IMR-90 (cell line): ENCODE measurements at regions of chr18 and their contacts with region 1.

Region 1: GRCh38 chr18:22563098-22563707 is 145.5 kb upstream of the CTAGE1 start:
- DNase-seq: peak; percentile 95
- ATAC-seq: peak; percentile 71
- H3K4me3 ChIP-seq: peak overlapping the region; percentile 5; the same call in 1 of the 2 replicates
- H3K27ac ChIP-seq: no peak overlapping the region
- H3K4me1 ChIP-seq: peaks cover 6% of the 10 kb centered on the region
- H3K27me3 ChIP-seq: no peaks in the 10 kb centered on the region; the same call in 1 of the 2 replicates
- CTCF ChIP-seq: peak; percentile 91
- POLR2A ChIP-seq: 0 out of 2 replicates have a peak, but pooled peaks have one; percentile 45
- RAD21 ChIP-seq: peak; percentile 100

Region 2: GRCh38 chr18:21904856-21905255 is 658.3 kb before region 1 on chr18:
- CTCF ChIA-PET with region 1: no interaction called
- POLR2A ChIA-PET with region 1: interaction called, 3 read pairs
- dilution Hi-C with region 1: no loop called
- in situ Hi-C with region 1: loop called (anchors 10 kb)
- intact Hi-C with region 1: no loop called
- DNase-seq: no peak
- ATAC-seq: no peak
- H3K4me3 ChIP-seq: no peak overlapping the region
- H3K27ac ChIP-seq: no peak overlapping the region
- H3K4me1 ChIP-seq: no peaks in the 10 kb centered on the region; the same call in 1 of the 2 replicates
- H3K27me3 ChIP-seq: peaks cover 18% of the 10 kb centered on the region
- CTCF ChIP-seq: no peak
- POLR2A ChIP-seq: no peak
- RAD21 ChIP-seq: no peak

Region 3: GRCh38 chr18:21997207-21998143 is 565.7 kb before region 1 on chr18:
- CTCF ChIA-PET with region 1: no interaction called
- POLR2A ChIA-PET with region 1: no interaction called
- dilution Hi-C with region 1: no loop called
- in situ Hi-C with region 1: no loop called
- intact Hi-C with region 1: loop called (anchors 5 kb)
- DNase-seq: peak; percentile 42
- ATAC-seq: peak; percentile 84
- H3K4me3 ChIP-seq: no peak overlapping the region
- H3K27ac ChIP-seq: no peak overlapping the region
- H3K4me1 ChIP-seq: no peaks in the 10 kb centered on the region
- H3K27me3 ChIP-seq: peaks cover 8% of the 10 kb centered on the region
- CTCF ChIP-seq: peak; percentile 68
- POLR2A ChIP-seq: no peak
- RAD21 ChIP-seq: peak; percentile 49

Region 4: GRCh38 chr18:22194151-22194598 is 369.0 kb before region 1 on chr18:
- CTCF ChIA-PET with region 1: no interaction called
- POLR2A ChIA-PET with region 1: interaction called, 18 read pairs
- dilution Hi-C with region 1: no loop called
- in situ Hi-C with region 1: no loop called
- intact Hi-C with region 1: no loop called
- DNase-seq: no peak
- ATAC-seq: no peak
- H3K4me3 ChIP-seq: no peak overlapping the region
- H3K27ac ChIP-seq: no peak overlapping the region
- H3K4me1 ChIP-seq: peaks cover 6% of the 10 kb centered on the region
- H3K27me3 ChIP-seq: no peaks in the 10 kb centered on the region
- CTCF ChIP-seq: no peak
- POLR2A ChIP-seq: no peak
- RAD21 ChIP-seq: no peak

Region 5: DNA sequence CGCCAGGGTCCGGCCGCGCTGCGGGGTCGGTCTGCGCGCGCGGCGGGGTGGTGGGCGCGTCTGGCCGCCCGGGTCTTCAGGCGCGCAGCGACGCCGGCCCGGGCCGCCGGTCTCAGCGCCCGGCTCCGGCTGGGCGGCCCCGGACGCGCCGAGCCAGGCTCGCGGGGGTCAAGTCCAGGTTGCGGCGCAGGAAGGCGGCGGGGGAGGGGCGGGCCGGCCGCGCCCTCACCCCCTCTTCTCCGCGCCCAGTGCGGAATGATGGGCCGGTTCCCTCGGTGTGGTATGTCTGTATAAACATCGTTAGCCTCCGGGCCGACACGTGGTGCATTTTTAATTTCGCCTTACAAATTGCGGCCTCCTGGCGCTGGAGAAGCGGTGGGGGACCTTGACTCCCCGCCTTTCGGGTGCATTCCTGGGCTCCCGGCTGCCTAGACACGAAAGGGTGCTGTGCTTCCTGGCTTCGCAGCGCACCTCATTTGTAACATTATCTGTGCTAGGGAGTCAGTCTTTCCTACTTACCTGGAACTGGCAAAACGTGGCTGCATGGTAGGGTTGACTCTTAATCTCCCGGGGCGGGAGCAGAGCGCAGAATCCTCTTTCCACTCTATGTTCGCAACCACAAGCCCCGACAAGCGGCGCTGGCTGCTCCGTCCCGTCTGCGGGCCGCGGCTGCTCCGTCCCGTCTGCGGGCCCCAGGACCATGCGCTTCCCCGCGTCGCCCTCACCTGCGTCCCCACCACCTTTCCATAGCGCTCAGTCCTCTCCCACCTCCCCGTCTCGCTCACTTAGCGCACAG is 214.5 kb before region 1 on chr18:
- CTCF ChIA-PET with region 1: no interaction called
- POLR2A ChIA-PET with region 1: no interaction called
- dilution Hi-C with region 1: no loop called
- in situ Hi-C with region 1: no loop called
- intact Hi-C with region 1: loop called (anchors 1 kb)
- DNase-seq: peak; percentile 42
- ATAC-seq: peak; percentile 77
- H3K4me3 ChIP-seq: peak overlapping the region; percentile 25
- H3K27ac ChIP-seq: peak overlapping the region; percentile 74
- H3K4me1 ChIP-seq: peaks cover 22% of the 10 kb centered on the region
- H3K27me3 ChIP-seq: no peaks in the 10 kb centered on the region
- CTCF ChIP-seq: no peak
- POLR2A ChIP-seq: no peak
- RAD21 ChIP-seq: no peak

Region 6: DNA sequence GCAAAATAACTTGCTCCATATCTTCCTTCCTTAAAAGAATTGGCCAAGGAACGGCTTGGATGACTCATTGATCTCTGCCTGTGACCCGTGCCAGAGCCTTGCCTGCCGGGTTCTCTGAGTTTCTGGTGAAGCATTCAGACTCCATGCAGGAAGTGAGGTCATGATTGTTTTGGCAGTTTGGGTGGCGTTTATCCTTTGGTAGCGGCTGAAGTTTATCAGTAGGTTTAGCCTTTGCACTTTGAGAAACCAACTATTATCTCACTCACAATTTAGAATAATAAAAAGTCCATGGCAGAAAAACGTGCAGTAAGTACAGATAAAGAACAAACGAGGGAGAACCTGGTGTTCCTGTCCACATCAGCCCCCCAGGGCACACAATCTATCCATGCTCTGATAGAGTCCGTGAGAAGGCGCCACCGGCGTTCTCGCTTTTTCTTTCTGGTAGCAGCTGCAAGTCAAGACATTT is 130.5 kb before region 1 on chr18:
- CTCF ChIA-PET with region 1: no interaction called
- POLR2A ChIA-PET with region 1: no interaction called
- dilution Hi-C with region 1: no loop called
- in situ Hi-C with region 1: no loop called
- intact Hi-C with region 1: loop called (anchors 10 kb)
- DNase-seq: peak; percentile 97
- ATAC-seq: peak; percentile 80
- H3K4me3 ChIP-seq: no peak overlapping the region
- H3K27ac ChIP-seq: peak overlapping the region; percentile 38
- H3K4me1 ChIP-seq: peaks cover 18% of the 10 kb centered on the region
- H3K27me3 ChIP-seq: no peaks in the 10 kb centered on the region
- CTCF ChIP-seq: no peak
- POLR2A ChIP-seq: no peak
- RAD21 ChIP-seq: peak; percentile 29; the same call in 1 of the 2 replicates

Region 7: DNA sequence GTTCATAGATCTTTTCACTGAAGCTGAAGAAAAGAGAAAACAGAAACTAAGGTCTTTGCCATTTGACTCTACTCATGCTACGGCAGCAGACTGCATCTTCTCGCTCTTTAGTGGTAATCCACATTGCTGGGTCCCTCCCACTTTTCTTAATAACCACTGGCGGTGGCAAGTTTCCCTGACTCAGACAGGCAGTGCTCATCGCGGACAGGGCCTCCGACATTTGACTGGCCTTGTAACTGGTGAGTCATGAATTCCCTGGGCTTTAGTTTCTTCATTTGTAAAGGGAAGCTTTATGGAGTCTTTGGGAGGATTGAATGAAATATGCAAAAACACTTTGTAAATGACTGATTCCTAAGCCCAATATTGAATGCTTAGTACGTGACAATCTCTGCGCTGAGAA is 131.8 kb after region 1 on chr18:
- CTCF ChIA-PET with region 1: no interaction called
- POLR2A ChIA-PET with region 1: no interaction called
- dilution Hi-C with region 1: no loop called
- in situ Hi-C with region 1: no loop called
- intact Hi-C with region 1: loop called (anchors 1 kb)
- DNase-seq: peak; percentile 98
- ATAC-seq: peak; percentile 92
- H3K4me3 ChIP-seq: peak overlapping the region; percentile 16; the same call in 1 of the 2 replicates
- H3K27ac ChIP-seq: peak overlapping the region; percentile 69; the same call in 1 of the 2 replicates
- H3K4me1 ChIP-seq: peaks cover 18% of the 10 kb centered on the region
- H3K27me3 ChIP-seq: no peaks in the 10 kb centered on the region
- CTCF ChIP-seq: no peak
- POLR2A ChIP-seq: peak; percentile 57; the same call in 1 of the 2 replicates
- RAD21 ChIP-seq: peak; percentile 14